ENCODE measurements at regions of chr5 and their contacts with region 1.

Region 1: GRCh38 chr5:76402886-76403765 is at the start of gene IQGAP2:
- DNase-seq: peak; percentile 73 to 97 (median 82)
- ATAC-seq: peak; percentile 54
- H3K4me3 ChIP-seq: peak within 1 kb of the TSS; percentile 77 to 93
- H3K4me3 Mint-ChIP-seq: peak within 1 kb of the TSS; percentile 95
- H3K27ac ChIP-seq: peak within 1 kb of the TSS; percentile 86 to 90
- H3K27ac Mint-ChIP-seq: peak within 1 kb of the TSS; percentile 98
- H3K4me1 ChIP-seq: peaks cover 44% of the 10 kb centered on the region
- H3K4me1 Mint-ChIP-seq: peaks cover 54% of the 10 kb centered on the region
- H3K27me3 ChIP-seq: no peaks in the 10 kb centered on the region
- H3K27me3 Mint-ChIP-seq: no peaks in the 10 kb centered on the region
- CTCF ChIP-seq: peak; percentile 70
- total RNA-seq, gene IQGAP2: 30.9 to 34.3 TPM

Region 2: DNA sequence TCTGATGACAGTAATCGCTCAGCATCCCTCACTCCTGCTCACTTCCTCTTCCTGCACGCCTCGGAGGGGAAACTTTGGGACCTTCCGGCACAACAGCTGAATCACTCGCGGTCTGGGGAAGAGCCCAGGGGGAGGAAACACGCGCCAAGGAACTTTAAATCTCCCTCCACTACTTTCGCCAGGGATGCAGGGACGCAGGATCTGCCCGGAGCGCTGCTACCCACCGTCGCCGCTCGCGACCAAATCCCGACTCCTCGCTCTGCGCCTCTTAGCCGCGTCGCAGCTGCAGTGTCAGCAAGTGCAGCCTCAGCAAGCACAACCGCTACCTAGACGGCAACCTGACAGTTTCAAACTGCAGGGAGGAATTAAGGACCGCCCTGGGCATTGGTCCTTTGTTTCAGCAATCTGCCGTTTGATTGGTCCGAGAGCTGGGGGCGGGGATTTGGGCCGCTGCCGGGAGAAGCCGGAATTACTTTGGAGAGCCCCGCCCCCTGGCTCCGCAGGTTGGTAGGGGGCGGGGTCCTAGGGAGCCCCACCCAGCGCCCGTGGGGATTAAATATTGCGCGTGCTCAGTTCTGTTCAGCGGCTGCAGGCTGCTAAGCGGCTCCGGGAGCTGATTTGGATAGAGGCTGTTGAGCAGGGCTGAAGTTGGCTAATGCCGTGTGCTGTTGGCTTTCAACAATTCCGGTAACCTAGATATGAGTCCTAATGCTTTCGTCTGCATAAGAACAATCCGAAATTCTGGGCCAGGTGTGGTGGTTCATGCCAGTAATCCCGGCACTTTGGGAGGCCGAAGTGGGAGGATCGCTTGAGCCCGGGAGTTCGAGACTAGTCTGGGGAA is 685.8 kb before region 1 on chr5 and contains the start of gene POC5:
- CTCF ChIA-PET with region 1: no interaction called
- POLR2A ChIA-PET with region 1: no interaction called
- intact Hi-C with region 1: loop called in 1 of 2 experiments (anchors 5 kb)
- DNase-seq: peak; percentile 96 to 99 (median 98)
- ATAC-seq: peak; percentile 95
- H3K4me3 ChIP-seq: peak within 1 kb of the TSS; percentile 82 to 93
- H3K4me3 Mint-ChIP-seq: peak within 1 kb of the TSS; percentile 100
- H3K27ac ChIP-seq: peak within 1 kb of the TSS; percentile 69 to 88
- H3K27ac Mint-ChIP-seq: peak within 1 kb of the TSS; percentile 98
- H3K4me1 ChIP-seq: peaks cover 11% of the 10 kb centered on the region
- H3K4me1 Mint-ChIP-seq: peaks cover 39% of the 10 kb centered on the region
- H3K27me3 ChIP-seq: no peaks in the 10 kb centered on the region
- H3K27me3 Mint-ChIP-seq: no peaks in the 10 kb centered on the region
- CTCF ChIP-seq: no peak
- total RNA-seq, gene POC5: 6.5 to 7.9 TPM

Region 3: DNA sequence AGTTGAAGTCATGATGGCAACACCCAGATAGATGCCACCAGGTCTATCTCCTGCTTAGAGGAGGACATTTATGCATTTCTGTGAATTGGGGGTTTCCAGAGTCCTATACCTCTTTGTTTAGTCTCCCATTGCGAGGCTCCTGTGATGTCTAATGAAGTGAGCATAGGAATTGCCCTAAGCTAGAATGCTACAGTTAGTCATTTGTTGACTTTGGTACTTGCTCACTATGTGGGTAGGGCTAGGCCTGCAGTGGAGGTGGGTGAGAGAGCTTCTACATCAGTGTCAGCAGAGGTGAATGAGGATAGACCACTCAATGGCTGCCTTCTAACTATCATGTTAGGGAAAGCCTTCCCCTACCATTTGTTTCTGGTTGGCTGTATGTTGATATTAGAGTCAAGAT is 512.6 kb before region 1 on chr5:
- CTCF ChIA-PET with region 1: no interaction called
- POLR2A ChIA-PET with region 1: no interaction called
- intact Hi-C with region 1: no loop called
- DNase-seq: no peak
- ATAC-seq: no peak
- H3K4me3 ChIP-seq: no peak overlapping the region
- H3K4me3 Mint-ChIP-seq: no peak overlapping the region
- H3K27ac ChIP-seq: no peak overlapping the region
- H3K27ac Mint-ChIP-seq: no peak overlapping the region
- H3K4me1 ChIP-seq: no peaks in the 10 kb centered on the region
- H3K4me1 Mint-ChIP-seq: no peaks in the 10 kb centered on the region
- H3K27me3 ChIP-seq: no peaks in the 10 kb centered on the region
- H3K27me3 Mint-ChIP-seq: peaks cover 3% of the 10 kb centered on the region
- CTCF ChIP-seq: no peak

Region 4: DNA sequence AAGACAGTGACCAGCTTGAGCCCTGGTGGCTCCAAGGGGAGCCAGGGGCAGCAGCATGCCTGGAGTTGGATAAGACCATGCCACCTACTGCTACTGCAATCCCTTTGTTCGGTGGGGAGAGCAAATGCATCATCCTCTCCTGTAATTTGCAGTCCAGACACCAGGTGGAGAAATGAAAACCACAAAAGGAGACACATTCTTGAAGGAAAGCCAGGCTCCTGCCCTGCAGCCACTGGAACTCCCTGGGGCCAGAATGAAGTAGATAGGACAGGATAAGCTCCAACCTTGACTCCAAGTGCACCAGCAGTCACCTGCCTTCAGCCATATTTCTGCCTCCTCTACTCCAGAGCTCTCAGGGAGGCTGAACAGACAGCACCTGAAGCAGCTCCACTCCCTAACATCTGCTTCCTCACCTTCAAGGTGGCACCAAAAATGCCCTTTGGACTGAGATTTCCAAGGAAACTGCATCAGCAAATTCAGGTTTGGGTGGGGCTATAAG is 65.1 kb before region 1 on chr5:
- CTCF ChIA-PET with region 1: interaction called, 8 read pairs
- POLR2A ChIA-PET with region 1: interaction called, 3 read pairs
- intact Hi-C with region 1: loop called (anchors 1 kb)
- DNase-seq: peak in 8 of 9 experiments; percentile 14 to 77 (median 40)
- ATAC-seq: peak; percentile 84
- H3K4me3 ChIP-seq: no peak overlapping the region
- H3K4me3 Mint-ChIP-seq: no peak overlapping the region
- H3K27ac ChIP-seq: no peak overlapping the region
- H3K27ac Mint-ChIP-seq: no peak overlapping the region
- H3K4me1 ChIP-seq: peaks cover 20% of the 10 kb centered on the region
- H3K4me1 Mint-ChIP-seq: peaks cover 28% of the 10 kb centered on the region
- H3K27me3 ChIP-seq: no peaks in the 10 kb centered on the region
- H3K27me3 Mint-ChIP-seq: no peaks in the 10 kb centered on the region
- CTCF ChIP-seq: peak; percentile 35

Region 5: DNA sequence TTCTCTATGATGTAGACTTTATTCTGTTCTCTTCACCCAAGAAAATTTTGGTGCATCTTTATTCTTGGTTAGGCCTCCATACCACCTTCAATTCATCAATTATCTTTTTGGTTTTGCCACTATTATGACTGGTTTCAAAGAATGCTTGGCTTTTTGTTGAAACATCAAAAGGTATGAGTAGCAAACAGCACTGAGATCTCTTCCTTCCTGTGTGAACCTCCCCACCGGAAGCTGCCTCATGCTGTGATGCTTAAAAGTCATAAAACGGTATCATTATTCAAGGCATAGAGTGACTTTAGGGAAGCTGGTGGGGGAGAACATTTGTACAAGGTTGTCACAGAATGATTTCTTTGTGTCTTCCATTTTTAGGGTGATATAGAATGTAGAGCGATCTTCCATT is 70.5 kb after region 1 on chr5:
- CTCF ChIA-PET with region 1: interaction called, 7 read pairs
- POLR2A ChIA-PET with region 1: interaction called, 3 read pairs
- intact Hi-C with region 1: loop called (anchors 1 to 2 kb)
- DNase-seq: peak; percentile 38 to 90 (median 70)
- ATAC-seq: peak; percentile 96
- H3K4me3 ChIP-seq: no peak overlapping the region
- H3K4me3 Mint-ChIP-seq: peak overlapping the region; percentile 35
- H3K27ac ChIP-seq: peak overlapping the region; percentile 18 to 65
- H3K27ac Mint-ChIP-seq: peak overlapping the region; percentile 88
- H3K4me1 ChIP-seq: peaks cover 49% of the 10 kb centered on the region
- H3K4me1 Mint-ChIP-seq: peaks cover 75% of the 10 kb centered on the region
- H3K27me3 ChIP-seq: no peaks in the 10 kb centered on the region
- H3K27me3 Mint-ChIP-seq: no peaks in the 10 kb centered on the region
- CTCF ChIP-seq: no peak

Region 6: DNA sequence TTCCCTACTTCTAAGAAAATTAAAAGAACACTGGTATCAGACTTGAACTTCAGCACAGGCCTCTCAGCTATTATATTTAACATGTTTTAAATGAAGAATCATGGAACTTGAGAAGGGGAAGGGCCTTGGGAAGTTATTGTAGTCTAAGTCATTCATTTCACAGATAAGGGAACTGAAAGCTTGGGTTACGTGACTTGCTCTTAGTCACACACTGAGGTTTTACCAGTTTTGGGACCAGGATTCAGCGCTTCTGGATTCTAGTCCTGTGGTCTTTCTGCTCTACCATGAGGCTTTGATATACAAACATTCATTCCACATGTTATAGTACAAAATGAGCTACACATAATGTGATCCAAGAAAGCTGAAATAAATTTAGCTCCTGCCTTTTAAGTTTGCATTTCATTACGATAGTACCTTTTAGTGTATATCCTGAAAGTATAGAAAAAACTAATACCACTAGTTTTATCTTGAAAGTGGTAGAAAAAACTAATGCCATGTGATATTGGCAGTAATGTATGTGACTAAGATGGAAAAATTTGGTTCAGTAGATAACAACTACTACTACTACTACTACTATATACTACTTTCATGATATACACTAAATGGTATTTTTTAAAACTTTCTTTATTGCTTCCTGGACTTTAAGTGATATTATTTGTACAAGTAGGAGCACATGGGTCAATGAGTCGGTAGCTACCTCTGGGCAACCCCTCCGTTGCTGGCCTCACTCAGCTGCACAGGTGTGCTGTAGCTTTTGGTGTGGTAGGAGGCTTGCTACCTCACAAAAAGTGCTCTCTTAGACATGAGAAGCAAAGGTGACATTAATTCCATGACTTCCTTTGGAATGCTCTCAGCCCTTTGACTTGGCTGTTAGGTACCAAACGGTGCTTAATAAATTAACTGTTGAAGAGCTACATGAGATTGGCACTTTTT is 179.4 kb after region 1 on chr5:
- CTCF ChIA-PET with region 1: interaction called, 34 read pairs
- POLR2A ChIA-PET with region 1: interaction called, 11 read pairs
- intact Hi-C with region 1: loop called (anchors 1 to 2 kb)
- DNase-seq: peak in 1 of 9 experiments; percentile 31
- ATAC-seq: no peak
- H3K4me3 ChIP-seq: no peak overlapping the region
- H3K4me3 Mint-ChIP-seq: no peak overlapping the region
- H3K27ac ChIP-seq: no peak overlapping the region
- H3K27ac Mint-ChIP-seq: peak overlapping the region; percentile 23
- H3K4me1 ChIP-seq: no peaks in the 10 kb centered on the region
- H3K4me1 Mint-ChIP-seq: peaks cover 13% of the 10 kb centered on the region
- H3K27me3 ChIP-seq: no peaks in the 10 kb centered on the region
- H3K27me3 Mint-ChIP-seq: no peaks in the 10 kb centered on the region
- CTCF ChIP-seq: no peak

Region 7: GRCh38 chr5:76742583-76742982 is 339.5 kb after region 1 on chr5:
- CTCF ChIA-PET with region 1: no interaction called
- POLR2A ChIA-PET with region 1: no interaction called
- intact Hi-C with region 1: loop called in 1 of 2 experiments (anchors 1 kb)
- DNase-seq: no peak
- ATAC-seq: no peak
- H3K4me3 ChIP-seq: no peak overlapping the region
- H3K4me3 Mint-ChIP-seq: no peak overlapping the region
- H3K27ac ChIP-seq: peak overlapping the region in 1 of 2 experiments; percentile 50
- H3K27ac Mint-ChIP-seq: no peak overlapping the region
- H3K4me1 ChIP-seq: peaks cover 21% of the 10 kb centered on the region
- H3K4me1 Mint-ChIP-seq: peaks cover 26% of the 10 kb centered on the region
- H3K27me3 ChIP-seq: no peaks in the 10 kb centered on the region
- H3K27me3 Mint-ChIP-seq: no peaks in the 10 kb centered on the region
- CTCF ChIP-seq: no peak

Measured in CD8-positive, alpha-beta T cell (primary cell).